ENCODE measurements at regions of chr13 and their contacts with region 1.

Region 1: GRCh38 chr13:108961542-108962125 is 332.2 kb downstream of the MYO16 start:
- DNase-seq: peak; percentile 47
- H3K4me3 ChIP-seq: no peak overlapping the region
- H3K27ac ChIP-seq: no peak overlapping the region
- H3K4me1 ChIP-seq: no peaks in the 10 kb centered on the region
- CTCF ChIP-seq: peak; percentile 79

Region 2: DNA sequence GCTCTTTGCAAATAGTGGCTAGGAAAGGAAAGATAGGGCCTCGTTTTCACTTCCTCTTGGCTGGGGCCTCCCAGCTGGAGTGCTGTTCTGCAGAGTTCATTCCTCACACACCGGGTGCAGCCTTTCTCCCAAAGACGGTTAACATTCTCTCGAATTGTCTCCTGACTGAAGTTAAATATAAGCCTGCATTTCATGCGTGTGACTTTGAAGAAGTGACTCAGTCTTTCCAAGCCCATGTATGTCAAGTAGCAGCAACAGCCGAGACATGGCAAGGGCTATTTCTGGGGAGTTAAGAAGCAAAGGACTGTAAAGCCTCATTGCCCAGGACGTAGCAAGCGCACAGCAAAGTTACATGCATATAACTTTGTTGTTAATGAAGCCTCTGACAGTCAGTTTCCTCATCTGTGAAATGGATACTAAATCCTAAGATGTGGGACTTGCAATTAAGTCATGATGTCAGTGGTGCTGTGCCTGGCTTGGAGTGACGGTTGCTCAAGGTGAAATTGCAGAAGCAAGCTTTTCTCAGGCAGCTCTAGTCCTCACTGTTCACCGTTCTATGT is 170.1 kb after region 1 on chr13:
- CTCF ChIA-PET with region 1: no interaction called
- POLR2A ChIA-PET with region 1: interaction called, 3 read pairs
- intact Hi-C with region 1: loop called (anchors 2 kb)
- DNase-seq: peak; percentile 58
- H3K4me3 ChIP-seq: peak overlapping the region; percentile 46
- H3K27ac ChIP-seq: peak overlapping the region; percentile 61
- H3K4me1 ChIP-seq: peaks cover 60% of the 10 kb centered on the region
- CTCF ChIP-seq: no peak

Region 3: DNA sequence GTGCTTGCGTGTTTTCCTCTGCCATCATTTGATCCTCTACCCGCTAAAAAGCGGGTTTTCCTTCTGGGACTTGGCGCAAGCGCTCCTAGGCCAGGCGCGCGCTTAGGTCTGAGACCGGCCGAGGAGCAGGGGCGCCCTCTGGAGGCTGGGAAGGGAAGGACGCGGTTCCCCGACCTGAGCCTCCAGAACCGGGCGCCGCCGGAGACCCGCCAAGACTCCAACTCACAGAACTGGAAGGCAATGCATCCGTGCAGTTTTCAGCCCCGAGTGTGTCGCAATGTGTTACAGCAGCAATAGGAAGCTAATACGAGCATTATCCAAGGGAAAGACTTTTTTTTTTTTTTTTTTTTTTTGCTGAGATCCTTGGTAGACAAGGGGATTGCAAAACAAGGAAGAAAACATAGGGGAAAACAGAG is 1154.4 kb after region 1 on chr13:
- CTCF ChIA-PET with region 1: no interaction called
- POLR2A ChIA-PET with region 1: interaction called, 3 read pairs
- intact Hi-C with region 1: loop called (anchors 5 kb)
- DNase-seq: peak; percentile 7
- H3K4me3 ChIP-seq: no peak overlapping the region
- H3K27ac ChIP-seq: no peak overlapping the region
- H3K4me1 ChIP-seq: no peaks in the 10 kb centered on the region
- CTCF ChIP-seq: peak; percentile 75

Measured in OCI-LY7 (cell line).